Activated CD4-positive, alpha-beta T cell treated with anti-CD3 and anti-CD28 coated beads for 36 hours (primary cell): ENCODE measurements at regions of chr2 and their contacts with region 1.

Region 1: DNA sequence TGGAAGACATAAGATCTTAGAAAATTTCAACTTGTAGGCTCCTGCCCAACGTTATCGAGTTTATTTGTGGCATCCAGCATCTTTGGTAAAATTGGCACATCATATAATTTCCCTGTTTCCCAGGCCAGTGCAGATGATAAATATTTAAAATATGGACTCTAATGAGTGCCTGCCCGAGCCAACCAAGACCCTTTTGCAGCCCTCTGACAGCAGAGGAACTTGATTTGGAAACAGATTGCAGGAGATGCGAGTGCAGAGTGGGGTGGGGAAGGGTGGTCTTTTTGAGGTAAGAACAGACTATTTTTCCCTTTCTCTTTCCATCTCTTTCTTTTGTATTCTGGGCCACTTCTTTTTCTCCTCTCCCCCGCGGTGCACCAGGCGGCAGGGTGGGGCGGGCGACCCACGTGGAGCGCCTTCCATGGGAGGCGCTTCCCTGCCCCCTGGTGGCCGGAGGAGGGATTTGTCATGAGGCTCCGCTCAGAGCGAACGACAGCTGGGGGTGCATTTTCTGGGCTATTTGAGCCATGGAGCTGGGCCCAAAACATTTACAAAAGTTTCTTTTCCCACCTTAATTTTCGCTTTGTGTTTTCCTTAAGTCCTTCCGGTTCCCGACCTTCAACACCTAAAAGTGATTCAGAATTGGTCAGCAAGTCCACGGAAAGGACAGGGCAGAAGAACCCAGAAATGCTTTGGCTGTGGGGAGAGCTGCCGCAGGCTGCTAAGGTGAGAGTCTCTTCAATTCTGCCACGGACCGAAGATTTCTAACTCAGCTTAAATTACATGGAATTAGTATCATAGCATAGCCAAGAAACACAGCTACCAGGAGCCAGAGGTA is 32.7 kb downstream of the LPIN1 start:
- DNase-seq: peak; percentile 93
- ATAC-seq: peak; percentile 92
- H3K4me3 Mint-ChIP-seq: peak overlapping the region; percentile 49
- H3K27ac Mint-ChIP-seq: peak overlapping the region; percentile 75
- H3K4me1 Mint-ChIP-seq: peaks cover 41% of the 10 kb centered on the region
- H3K27me3 Mint-ChIP-seq: no peaks in the 10 kb centered on the region

Region 2: DNA sequence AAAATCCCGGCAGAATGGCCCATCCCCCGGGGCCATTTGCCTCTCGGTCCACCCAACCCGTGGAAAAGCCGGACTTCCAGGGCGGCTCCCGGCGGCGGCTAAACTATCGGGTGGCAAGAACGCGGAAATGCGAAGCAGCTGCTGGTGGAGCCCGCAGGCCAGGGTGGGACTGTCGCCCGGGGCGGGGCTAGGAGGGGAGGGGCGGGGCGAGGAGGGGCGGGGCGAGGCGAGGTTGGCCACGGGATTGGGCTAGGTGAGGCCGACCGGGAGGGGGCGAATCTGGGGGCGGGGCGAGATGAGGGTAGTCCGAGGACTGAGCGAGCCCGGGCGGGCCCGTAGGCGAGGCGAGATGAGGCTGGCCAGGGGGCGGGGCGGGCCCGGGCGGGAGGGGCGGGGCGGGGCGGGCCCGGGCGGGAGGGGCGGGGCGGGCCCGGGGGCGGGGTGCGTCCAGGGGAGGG is 624.2 kb before region 1 on chr2:
- CTCF ChIA-PET with region 1: no interaction called
- POLR2A ChIA-PET with region 1: no interaction called
- intact Hi-C with region 1: loop called in 1 of 2 experiments (anchors 10 kb)
- DNase-seq: peak; percentile 100
- ATAC-seq: peak; percentile 95
- H3K4me3 Mint-ChIP-seq: peak overlapping the region; percentile 73
- H3K27ac Mint-ChIP-seq: peak overlapping the region; percentile 83
- H3K4me1 Mint-ChIP-seq: peaks cover 15% of the 10 kb centered on the region
- H3K27me3 Mint-ChIP-seq: no peaks in the 10 kb centered on the region

Region 3: GRCh38 chr2:11688222-11689069 is 90.7 kb before region 1 on chr2:
- CTCF ChIA-PET with region 1: interaction called, 171 read pairs
- POLR2A ChIA-PET with region 1: interaction called, 7 read pairs
- intact Hi-C with region 1: loop called (anchors 1 kb)
- DNase-seq: peak; percentile 92
- ATAC-seq: peak; percentile 95
- H3K4me3 Mint-ChIP-seq: no peak overlapping the region
- H3K27ac Mint-ChIP-seq: no peak overlapping the region
- H3K4me1 Mint-ChIP-seq: peaks cover 9% of the 10 kb centered on the region
- H3K27me3 Mint-ChIP-seq: peaks cover 5% of the 10 kb centered on the region

Region 4: GRCh38 chr2:11743846-11744553 is 35.1 kb before region 1 on chr2:
- CTCF ChIA-PET with region 1: interaction called, 66 read pairs
- POLR2A ChIA-PET with region 1: interaction called, 3 read pairs
- intact Hi-C with region 1: loop called (anchors 2 kb)
- DNase-seq: peak; percentile 90
- ATAC-seq: peak; percentile 83
- H3K4me3 Mint-ChIP-seq: peak overlapping the region; percentile 34
- H3K27ac Mint-ChIP-seq: peak overlapping the region; percentile 73
- H3K4me1 Mint-ChIP-seq: peaks cover 54% of the 10 kb centered on the region
- H3K27me3 Mint-ChIP-seq: no peaks in the 10 kb centered on the region

Region 5: GRCh38 chr2:11762799-11763461 is 16.2 kb before region 1 on chr2:
- CTCF ChIA-PET with region 1: interaction called, 10 read pairs
- POLR2A ChIA-PET with region 1: no interaction called
- intact Hi-C with region 1: no loop called
- DNase-seq: no peak
- ATAC-seq: no peak
- H3K4me3 Mint-ChIP-seq: no peak overlapping the region
- H3K27ac Mint-ChIP-seq: peak overlapping the region; percentile 64
- H3K4me1 Mint-ChIP-seq: peaks cover 32% of the 10 kb centered on the region
- H3K27me3 Mint-ChIP-seq: no peaks in the 10 kb centered on the region

Region 6: DNA sequence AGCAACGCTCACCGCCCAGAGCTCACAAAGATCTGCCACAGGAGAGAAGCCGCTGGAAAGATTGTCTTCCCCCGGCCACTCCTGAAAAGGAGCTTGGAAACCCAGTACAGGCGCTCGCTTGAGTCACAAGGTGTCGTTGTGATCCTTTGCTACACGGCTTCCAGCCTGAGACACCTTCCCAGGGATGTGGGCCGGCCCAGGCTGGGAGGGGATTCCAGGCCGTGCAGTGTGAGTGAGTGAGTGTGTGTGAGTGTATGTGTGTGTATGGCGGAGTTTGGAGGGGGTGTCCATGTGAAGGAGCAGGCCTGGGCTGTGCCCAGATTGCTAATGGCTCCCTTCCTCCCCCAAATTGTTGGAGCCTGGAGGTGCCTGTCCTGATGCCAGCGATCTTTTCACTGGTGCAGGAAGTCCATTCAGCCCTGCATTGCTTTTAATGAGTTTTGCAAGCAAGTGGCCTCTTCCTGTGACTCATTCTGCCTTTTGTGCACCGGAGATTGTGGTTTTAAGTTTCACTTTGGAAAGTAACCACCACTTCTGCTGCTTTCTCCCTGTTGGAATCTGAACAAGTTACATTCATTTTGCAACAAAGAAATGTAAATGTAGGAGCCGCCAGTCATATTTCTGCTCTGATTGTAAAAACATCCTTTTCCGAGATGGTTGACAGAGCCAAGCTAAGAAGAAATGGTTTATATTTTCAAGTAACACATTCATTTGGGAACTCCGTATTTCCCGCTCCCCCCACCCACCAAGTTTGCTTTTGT is 51.0 kb after region 1 on chr2:
- CTCF ChIA-PET with region 1: no interaction called
- POLR2A ChIA-PET with region 1: no interaction called
- intact Hi-C with region 1: no loop called
- DNase-seq: peak; percentile 67
- ATAC-seq: peak; percentile 77
- H3K4me3 Mint-ChIP-seq: peak overlapping the region; percentile 20
- H3K27ac Mint-ChIP-seq: peak overlapping the region; percentile 58
- H3K4me1 Mint-ChIP-seq: peaks cover 40% of the 10 kb centered on the region
- H3K27me3 Mint-ChIP-seq: peaks cover 26% of the 10 kb centered on the region

Region 7: GRCh38 chr2:12389344-12390045 is 610.4 kb after region 1 on chr2:
- CTCF ChIA-PET with region 1: no interaction called
- POLR2A ChIA-PET with region 1: no interaction called
- intact Hi-C with region 1: no loop called
- DNase-seq: no peak
- ATAC-seq: no peak
- H3K4me3 Mint-ChIP-seq: no peak overlapping the region
- H3K27ac Mint-ChIP-seq: no peak overlapping the region
- H3K4me1 Mint-ChIP-seq: peaks cover under 1% of the 10 kb centered on the region
- H3K27me3 Mint-ChIP-seq: peaks cover 1% of the 10 kb centered on the region